H1 (cell line): ENCODE measurements at regions of chr6 and their contacts with region 1.

Region 1: DNA sequence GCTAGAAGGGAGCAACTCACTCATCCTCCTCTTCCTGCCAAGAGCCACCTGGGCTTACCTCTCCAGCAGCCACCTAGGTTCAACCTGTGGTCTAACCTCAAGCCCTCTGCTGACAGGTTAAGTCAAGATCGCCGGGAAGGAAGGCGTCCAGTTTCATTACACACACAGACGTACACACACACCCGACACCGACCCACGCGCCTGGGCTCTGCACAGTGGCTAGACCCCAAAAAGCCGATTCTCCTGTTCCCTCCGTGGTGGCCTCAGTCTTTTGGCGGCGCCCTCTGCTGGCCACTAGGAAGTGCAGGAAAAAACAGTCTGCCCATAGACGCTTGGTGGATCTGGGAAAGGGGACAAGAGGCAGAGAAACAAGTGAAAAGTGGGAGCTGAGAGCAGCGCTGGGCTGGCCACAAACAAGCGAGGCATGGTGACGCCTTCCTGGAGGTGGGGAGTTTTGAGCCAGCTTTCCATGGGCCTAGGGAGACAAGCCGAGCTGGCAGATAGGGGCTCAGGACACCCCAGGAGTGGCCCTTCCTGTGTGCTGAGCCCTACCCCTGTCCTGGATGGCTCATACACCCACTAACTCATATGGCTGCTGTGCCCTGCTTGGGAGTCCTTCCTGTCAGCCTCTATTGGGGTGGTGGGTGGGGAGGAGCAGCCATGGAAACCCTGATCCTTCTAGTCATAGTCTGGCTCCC is 52.7 kb downstream of the MRPL14 start:
- DNase-seq: peak in 1 of 2 experiments; percentile 81
- H3K4me3 ChIP-seq: peak overlapping the region in 1 of 4 experiments; percentile 56; a peak in 1 of 8 replicates
- H3K27ac ChIP-seq: no peak overlapping the region
- H3K4me1 ChIP-seq: peaks cover 9 to 32% (median 26%) of the 10 kb centered on the region in 4 experiments
- H3K27me3 ChIP-seq: peaks cover 0 to 9% (median 2%) of the 10 kb centered on the region in 4 experiments; a peak in 4 of 7 replicates
- CTCF ChIP-seq: peak in 2 of 3 experiments; percentile 88 to 91; a peak in 3 of 4 replicates
- EP300 ChIP-seq: no peak
- POLR2A ChIP-seq: no peak
- RAD21 ChIP-seq: peak; percentile 67 to 77

Region 2: DNA sequence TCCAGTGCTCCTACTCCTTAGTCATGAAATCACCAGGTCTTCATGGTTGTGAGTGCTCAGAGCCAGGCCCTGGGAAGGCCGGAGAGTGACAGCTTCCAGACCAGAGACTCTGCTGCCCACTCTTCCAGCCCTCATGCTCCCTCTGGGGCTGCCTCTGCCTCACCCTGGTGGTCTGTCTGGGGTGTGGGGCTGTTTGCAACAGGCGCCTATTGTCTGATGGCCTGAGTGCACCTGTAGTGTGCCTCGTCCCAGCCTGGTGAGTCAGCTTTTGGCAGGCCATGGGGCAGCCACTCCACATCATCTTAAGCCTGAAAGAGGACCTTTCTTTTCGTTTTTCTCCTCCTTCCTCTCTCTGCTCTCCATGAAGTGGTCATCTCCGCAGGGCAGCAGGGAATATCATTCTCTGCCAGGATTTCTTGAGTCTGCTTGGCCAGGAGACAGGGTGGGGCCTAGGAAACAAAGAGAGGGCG is 130.8 kb before region 1 on chr6:
- CTCF ChIA-PET with region 1: interaction called, 18 read pairs
- POLR2A ChIA-PET with region 1: no interaction called
- DNase-seq: no peak
- H3K4me3 ChIP-seq: no peak overlapping the region
- H3K27ac ChIP-seq: no peak overlapping the region
- H3K4me1 ChIP-seq: peaks cover 0 to 6% (median 0%) of the 10 kb centered on the region in 4 experiments; a peak in 4 of 7 replicates
- H3K27me3 ChIP-seq: no peaks in the 10 kb centered on the region
- CTCF ChIP-seq: no peak
- EP300 ChIP-seq: no peak
- POLR2A ChIP-seq: no peak
- RAD21 ChIP-seq: no peak; a peak in 1 of 4 replicates

Region 3: DNA sequence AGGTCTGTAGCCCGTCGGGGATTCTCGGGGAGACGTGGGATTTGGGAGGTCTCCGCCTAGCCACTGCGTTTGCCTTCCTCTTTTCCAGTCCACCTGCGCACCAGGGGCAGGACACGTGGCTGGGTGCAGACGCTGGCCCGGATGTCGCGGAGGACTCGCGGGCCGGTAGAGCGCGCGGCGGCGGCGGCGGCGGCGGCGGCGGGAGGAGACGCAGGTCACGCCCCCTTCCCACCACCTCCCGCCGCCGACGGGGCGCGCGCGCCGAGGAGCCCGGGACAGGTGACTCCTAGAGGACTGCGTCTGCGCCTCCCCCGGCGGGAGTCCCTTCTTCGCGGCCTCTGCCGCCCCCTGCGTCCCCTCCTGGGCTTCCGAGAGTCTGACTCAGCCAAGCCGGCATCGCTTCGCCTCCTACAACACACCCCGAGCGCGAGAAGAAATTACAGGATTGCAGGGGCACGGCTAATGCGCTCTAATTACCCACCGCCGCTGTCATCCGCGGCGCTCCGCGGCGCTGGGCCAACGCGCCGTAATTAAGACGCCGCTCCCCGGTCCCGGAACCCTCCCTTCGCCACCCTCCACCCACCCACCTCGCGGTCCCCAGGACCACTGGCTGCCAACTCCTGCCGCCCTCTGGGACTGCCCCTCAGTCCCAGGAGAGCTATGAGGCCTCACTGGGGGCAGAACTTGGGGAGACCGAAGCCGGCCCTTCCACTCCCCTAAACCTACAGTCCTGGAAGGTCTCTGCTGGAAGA is 71.8 kb before region 1 on chr6:
- CTCF ChIA-PET with region 1: interaction called, 331 read pairs
- POLR2A ChIA-PET with region 1: interaction called, 4 read pairs
- DNase-seq: peak; percentile 44 to 86
- H3K4me3 ChIP-seq: peak overlapping the region; percentile 22 to 60 (median 37); a peak in 7 of 8 replicates
- H3K27ac ChIP-seq: peak overlapping the region; percentile 20; the same call in 1 of the 2 replicates
- H3K4me1 ChIP-seq: peaks cover 4 to 48% (median 38%) of the 10 kb centered on the region in 4 experiments
- H3K27me3 ChIP-seq: peaks cover 0 to 18% (median 9%) of the 10 kb centered on the region in 4 experiments; a peak in 5 of 7 replicates
- CTCF ChIP-seq: peak in 1 of 3 experiments; percentile 5; a peak in 2 of 4 replicates
- EP300 ChIP-seq: peak in 1 of 2 experiments; percentile 2; a peak in 1 of 3 replicates
- POLR2A ChIP-seq: no peak
- RAD21 ChIP-seq: peak in 1 of 2 experiments; percentile 17; a peak in 1 of 4 replicates

Region 4: GRCh38 chr6:44022296-44022661 is 52.3 kb before region 1 on chr6:
- CTCF ChIA-PET with region 1: interaction called, 331 read pairs
- POLR2A ChIA-PET with region 1: no interaction called
- DNase-seq: no peak
- H3K4me3 ChIP-seq: no peak overlapping the region
- H3K27ac ChIP-seq: no peak overlapping the region
- H3K4me1 ChIP-seq: peaks cover 0 to 4% (median 0%) of the 10 kb centered on the region in 4 experiments; a peak in 1 of 7 replicates
- H3K27me3 ChIP-seq: no peaks in the 10 kb centered on the region
- CTCF ChIP-seq: no peak
- EP300 ChIP-seq: no peak
- POLR2A ChIP-seq: no peak
- RAD21 ChIP-seq: no peak

Region 5: GRCh38 chr6:44058617-44059358 is 15.8 kb before region 1 on chr6:
- CTCF ChIA-PET with region 1: interaction called, 60 read pairs
- POLR2A ChIA-PET with region 1: interaction called, 5 read pairs
- DNase-seq: no peak
- H3K4me3 ChIP-seq: no peak overlapping the region
- H3K27ac ChIP-seq: no peak overlapping the region
- H3K4me1 ChIP-seq: peaks cover 0 to 4% (median 0%) of the 10 kb centered on the region in 4 experiments; a peak in 4 of 7 replicates
- H3K27me3 ChIP-seq: no peaks in the 10 kb centered on the region
- CTCF ChIP-seq: no peak
- EP300 ChIP-seq: no peak
- POLR2A ChIP-seq: no peak
- RAD21 ChIP-seq: no peak

Region 6: GRCh38 chr6:44086931-44087574 is 12.5 kb after region 1 on chr6:
- CTCF ChIA-PET with region 1: interaction called, 14 read pairs
- POLR2A ChIA-PET with region 1: interaction called, 5 read pairs
- DNase-seq: no peak
- H3K4me3 ChIP-seq: no peak overlapping the region
- H3K27ac ChIP-seq: no peak overlapping the region
- H3K4me1 ChIP-seq: peaks cover 0 to 6% (median 3%) of the 10 kb centered on the region in 4 experiments; a peak in 6 of 7 replicates
- H3K27me3 ChIP-seq: no peaks in the 10 kb centered on the region
- CTCF ChIP-seq: no peak
- EP300 ChIP-seq: no peak
- POLR2A ChIP-seq: no peak
- RAD21 ChIP-seq: no peak